Aorta (tissue), 5 donors: ENCODE measurements at regions of chr4 and their contacts with region 1.

Region 1: DNA sequence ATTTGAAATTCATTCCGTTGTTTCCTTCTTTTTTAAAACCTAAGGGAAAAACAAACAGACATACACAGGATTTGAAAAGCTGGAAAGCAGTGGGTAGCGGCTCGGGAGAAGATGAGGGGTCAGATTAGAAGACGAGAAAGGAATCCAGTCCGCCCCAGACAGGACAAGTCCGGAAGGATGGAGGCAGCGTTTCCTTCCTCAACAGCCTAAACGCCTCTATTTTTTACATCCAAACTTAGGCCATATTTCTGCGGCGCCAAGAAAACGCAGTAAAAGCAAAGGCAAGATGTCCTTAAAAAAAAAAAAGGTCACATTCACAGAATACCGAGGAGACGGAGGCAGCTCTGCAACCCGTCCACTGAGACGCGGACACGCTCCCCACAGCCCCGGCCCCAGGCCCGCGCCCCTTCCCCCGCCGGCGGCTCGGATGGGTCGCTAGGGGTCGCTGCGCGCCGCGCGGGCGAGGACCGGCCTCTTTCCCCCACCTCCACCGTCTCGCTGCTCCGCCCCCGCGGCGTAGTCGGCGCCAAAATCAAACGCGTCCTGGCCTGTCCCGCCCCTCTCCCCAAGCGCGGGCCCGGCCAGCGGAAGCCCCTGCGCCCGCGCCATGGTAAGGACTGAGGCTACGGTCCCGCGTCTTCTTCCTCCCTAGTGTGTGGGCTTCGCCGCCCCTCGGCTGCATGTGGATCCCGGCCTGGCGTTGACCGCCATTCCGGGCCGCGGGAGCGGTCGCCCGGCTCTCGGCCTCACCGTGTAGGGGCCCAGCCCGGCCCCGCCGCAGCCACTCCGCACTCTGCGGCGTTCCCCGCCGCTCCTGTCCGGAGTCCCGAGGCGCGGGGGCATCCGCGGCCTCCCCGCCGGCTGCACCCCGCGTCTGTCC is at the start of gene MND1:
- DNase-seq: peak; percentile 90 to 97
- ATAC-seq: peak; percentile 97
- H3K4me3 ChIP-seq: peak within 1 kb of the TSS; percentile 71 to 93
- H3K27ac ChIP-seq: no peak within 1 kb of the TSS
- H3K4me1 ChIP-seq: no peaks in the 10 kb centered on the region
- H3K27me3 ChIP-seq: no peaks in the 10 kb centered on the region
- total RNA-seq, gene MND1: 0.81 to 1.3 TPM

Region 2: GRCh38 chr4:153402366-153402765 is 58.0 kb after region 1 on chr4:
- intact Hi-C with region 1: loop called in 1 of 2 experiments (anchors 5 kb)
- DNase-seq: no peak
- ATAC-seq: no peak
- H3K4me3 ChIP-seq: no peak overlapping the region
- H3K27ac ChIP-seq: no peak overlapping the region
- H3K4me1 ChIP-seq: no peaks in the 10 kb centered on the region
- H3K27me3 ChIP-seq: no peaks in the 10 kb centered on the region

Region 3: DNA sequence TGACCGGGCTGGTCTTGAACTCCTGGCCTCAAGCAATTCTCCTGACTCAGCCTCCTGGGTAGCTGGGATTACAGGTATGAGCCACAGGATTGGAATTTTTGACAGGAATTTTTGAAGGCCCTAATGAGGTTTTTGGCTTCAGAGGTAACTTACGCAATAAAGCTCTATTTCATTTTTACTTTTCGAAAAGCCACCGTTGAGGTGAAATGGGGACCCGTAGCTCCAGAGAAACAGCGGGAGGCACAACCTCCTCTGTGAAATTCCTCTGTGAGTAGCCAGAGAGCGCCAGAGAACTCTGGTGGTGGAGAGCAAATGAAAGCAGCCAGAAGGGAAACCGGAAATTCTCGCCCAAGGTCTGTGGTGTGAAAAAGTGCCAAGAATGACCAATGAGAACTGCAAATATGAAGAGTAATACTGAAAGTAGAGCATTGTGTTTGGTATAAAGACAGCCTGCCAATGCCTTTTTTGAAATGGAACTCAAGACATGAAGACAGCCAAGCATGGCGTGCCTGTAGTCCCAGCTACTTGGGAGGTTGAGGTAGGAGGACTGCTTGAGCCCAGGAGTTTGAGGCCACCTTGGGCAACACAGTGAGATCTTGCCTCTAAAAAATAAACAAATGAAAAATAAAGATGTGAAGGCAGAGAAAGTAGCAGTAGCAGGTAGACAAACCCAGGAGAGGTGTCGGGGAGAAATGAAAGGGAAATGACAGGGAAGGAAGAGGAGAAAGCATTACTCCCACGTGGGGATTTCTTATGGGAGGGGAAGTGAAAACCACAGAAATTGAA is 88.8 kb after region 1 on chr4:
- intact Hi-C with region 1: loop called in 1 of 2 experiments (anchors 10 kb)
- DNase-seq: peak in 1 of 2 donors; percentile 78
- ATAC-seq: peak; percentile 74
- H3K4me3 ChIP-seq: no peak overlapping the region
- H3K27ac ChIP-seq: no peak overlapping the region
- H3K4me1 ChIP-seq: no peaks in the 10 kb centered on the region
- H3K27me3 ChIP-seq: no peaks in the 10 kb centered on the region

Region 4: DNA sequence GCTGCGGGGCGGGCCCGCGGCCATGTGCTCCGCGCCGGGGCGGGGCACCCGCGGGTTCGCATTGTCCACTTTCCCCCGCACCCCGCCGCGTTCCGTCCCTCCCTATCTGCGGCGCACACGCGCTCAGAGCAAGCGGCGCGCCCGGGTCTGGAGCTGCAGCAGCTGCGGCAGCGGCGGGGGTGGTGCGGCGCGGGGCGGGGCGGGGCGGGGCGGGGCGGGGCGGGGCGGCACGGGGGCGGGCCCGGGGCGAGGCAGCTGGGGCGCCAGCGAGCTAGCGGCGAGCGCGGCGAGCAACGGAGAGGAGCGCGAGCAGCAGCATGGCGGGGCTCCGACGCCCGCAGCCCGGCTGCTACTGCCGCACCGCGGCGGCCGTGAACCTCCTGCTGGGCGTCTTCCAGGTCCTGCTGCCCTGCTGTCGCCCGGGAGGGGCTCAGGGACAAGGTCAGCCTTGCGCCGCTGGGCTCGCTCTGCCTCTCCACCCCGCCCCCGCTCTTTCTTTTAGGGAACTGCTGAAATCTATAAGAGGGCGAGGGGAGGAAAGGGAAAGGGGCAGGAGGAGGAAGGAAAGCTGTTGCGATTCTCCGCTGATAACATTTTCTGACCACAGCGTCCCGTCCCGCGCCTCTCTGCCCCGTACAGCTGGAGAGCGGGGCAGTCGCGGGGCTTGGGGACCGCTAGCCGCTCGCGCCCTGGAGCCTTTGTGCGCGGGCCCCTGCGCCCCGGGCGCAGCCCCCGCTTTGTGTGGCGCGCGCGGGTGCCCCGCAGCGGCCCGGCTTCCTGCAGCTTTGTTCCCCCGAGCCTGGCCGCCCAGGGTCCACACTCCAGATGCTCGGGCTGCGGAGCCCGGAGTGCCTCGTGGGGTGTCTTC is 121.9 kb after region 1 on chr4 and contains the start of gene TMEM131L:
- intact Hi-C with region 1: loop called (anchors 5 to 10 kb)
- DNase-seq: peak; percentile 74 to 89
- ATAC-seq: peak; percentile 91
- H3K4me3 ChIP-seq: peak within 1 kb of the TSS; percentile 78 to 86
- H3K27ac ChIP-seq: peak within 1 kb of the TSS in 1 of 2 donors; percentile 55
- H3K4me1 ChIP-seq: no peaks in the 10 kb centered on the region
- H3K27me3 ChIP-seq: no peaks in the 10 kb centered on the region
- total RNA-seq, gene TMEM131L: 20.1 to 22.5 TPM

Region 5: DNA sequence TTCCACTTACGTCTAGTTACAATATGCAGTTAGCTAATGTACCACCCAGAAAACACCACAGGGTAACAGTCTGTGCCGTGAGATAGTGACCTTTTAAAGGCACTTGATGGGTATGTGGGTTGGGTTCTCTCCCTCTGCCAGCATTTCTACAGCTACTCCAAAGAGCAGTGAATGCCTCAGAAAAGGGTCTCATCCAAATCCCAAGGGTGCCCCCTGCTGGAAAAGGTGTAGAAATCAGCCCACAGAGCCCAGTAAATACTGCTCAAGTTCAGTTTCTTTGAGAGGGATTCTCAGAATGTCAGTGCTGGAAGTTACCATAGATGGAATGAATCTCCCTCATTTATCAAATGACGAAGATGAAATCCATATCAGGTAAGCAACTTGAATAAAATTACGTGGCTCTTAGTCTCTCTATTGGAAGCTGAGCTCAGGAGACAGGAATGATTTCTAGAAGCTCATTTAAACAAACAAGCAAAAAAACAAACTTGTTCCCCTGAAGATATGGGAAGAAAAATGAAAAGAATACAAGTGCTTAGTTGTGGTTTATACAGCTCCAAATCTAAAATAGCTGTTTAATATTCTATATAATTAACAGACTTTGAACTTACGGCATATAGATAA is 405.9 kb after region 1 on chr4:
- intact Hi-C with region 1: loop called (anchors 2 to 5 kb)
- DNase-seq: peak in 1 of 2 donors; percentile 67
- ATAC-seq: peak; percentile 90
- H3K4me3 ChIP-seq: no peak overlapping the region
- H3K27ac ChIP-seq: no peak overlapping the region
- H3K4me1 ChIP-seq: peaks cover 0 to 3% of the 10 kb centered on the region in 2 donors
- H3K27me3 ChIP-seq: no peaks in the 10 kb centered on the region